ENCODE measurements at regions of chr2 and their contacts with region 1.

Region 1: GRCh38 chr2:26846328-26847306 is 1.3 kb upstream of the DPYSL5 start:
- DNase-seq: peak; percentile 48
- H3K4me3 ChIP-seq: no peak overlapping the region
- H3K27ac ChIP-seq: no peak overlapping the region
- H3K4me1 ChIP-seq: peaks cover 23% of the 10 kb centered on the region
- H3K27me3 ChIP-seq: peaks cover 72% of the 10 kb centered on the region
- CTCF ChIP-seq: peak; percentile 51

Region 2: DNA sequence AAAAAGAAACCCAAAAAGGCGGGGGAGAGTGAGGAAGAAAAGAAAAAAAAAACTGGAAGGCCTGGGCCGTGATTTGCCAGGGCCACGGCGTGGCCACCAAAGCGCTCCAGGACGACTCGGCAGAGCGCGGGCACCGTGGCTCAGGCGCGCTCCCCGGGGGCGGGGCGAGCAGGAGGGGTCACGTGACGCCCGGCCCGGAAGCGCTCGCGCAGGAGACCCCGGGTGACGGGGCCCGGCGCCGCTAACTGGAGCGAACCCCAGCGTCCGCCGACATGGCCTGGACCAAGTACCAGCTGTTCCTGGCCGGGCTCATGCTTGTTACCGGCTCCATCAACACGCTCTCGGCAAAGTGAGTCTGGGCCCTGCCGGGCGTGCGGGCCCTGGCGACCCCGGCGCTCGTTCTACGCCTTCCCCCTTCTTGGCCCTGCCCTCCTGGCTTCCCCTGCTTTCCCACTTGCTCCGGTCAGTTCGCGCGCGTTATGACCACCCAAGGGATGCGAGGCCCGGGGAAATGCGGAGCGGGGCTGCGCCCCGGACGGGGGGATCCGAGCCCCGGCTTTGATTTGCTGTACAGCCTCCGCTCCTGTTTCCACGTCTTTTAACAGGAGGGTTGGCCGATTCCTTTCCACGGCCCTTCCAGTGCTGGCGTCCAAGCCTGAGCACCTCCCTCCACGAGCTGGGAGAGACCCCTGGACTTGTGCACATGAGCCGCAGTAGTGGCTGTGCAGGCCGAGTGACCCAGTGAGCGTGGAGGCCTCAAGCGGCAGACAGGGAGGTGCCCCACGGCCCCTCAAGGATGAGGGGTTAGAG is 82.3 kb before region 1 on chr2 and contains the start of gene SLC35F6:
- intact Hi-C with region 1: no loop called
- DNase-seq: peak; percentile 84
- H3K4me3 ChIP-seq: peak within 1 kb of the TSS; percentile 94
- H3K27ac ChIP-seq: peak within 1 kb of the TSS; percentile 74
- H3K4me1 ChIP-seq: peaks cover 8% of the 10 kb centered on the region
- H3K27me3 ChIP-seq: no peaks in the 10 kb centered on the region
- CTCF ChIP-seq: no peak
- total RNA-seq, gene SLC35F6: 24.8 to 29.1 TPM

Region 3: GRCh38 chr2:26942543-26943295 is 96.1 kb after region 1 on chr2:
- intact Hi-C with region 1: loop called (anchors 2 kb)
- DNase-seq: peak; percentile 59
- H3K4me3 ChIP-seq: no peak overlapping the region
- H3K27ac ChIP-seq: no peak overlapping the region
- H3K4me1 ChIP-seq: no peaks in the 10 kb centered on the region
- H3K27me3 ChIP-seq: peaks cover 7% of the 10 kb centered on the region
- CTCF ChIP-seq: peak; percentile 82

Region 4: GRCh38 chr2:27016801-27017325 is 170.2 kb after region 1 on chr2:
- intact Hi-C with region 1: loop called (anchors 10 kb)
- DNase-seq: peak; percentile 68
- H3K4me3 ChIP-seq: no peak overlapping the region
- H3K27ac ChIP-seq: no peak overlapping the region
- H3K4me1 ChIP-seq: peaks cover 12% of the 10 kb centered on the region
- H3K27me3 ChIP-seq: no peaks in the 10 kb centered on the region
- CTCF ChIP-seq: peak; percentile 57